Endothelial cell of umbilical vein (primary cell): ENCODE measurements at regions of chr1 and their contacts with region 1.

Region 1: DNA sequence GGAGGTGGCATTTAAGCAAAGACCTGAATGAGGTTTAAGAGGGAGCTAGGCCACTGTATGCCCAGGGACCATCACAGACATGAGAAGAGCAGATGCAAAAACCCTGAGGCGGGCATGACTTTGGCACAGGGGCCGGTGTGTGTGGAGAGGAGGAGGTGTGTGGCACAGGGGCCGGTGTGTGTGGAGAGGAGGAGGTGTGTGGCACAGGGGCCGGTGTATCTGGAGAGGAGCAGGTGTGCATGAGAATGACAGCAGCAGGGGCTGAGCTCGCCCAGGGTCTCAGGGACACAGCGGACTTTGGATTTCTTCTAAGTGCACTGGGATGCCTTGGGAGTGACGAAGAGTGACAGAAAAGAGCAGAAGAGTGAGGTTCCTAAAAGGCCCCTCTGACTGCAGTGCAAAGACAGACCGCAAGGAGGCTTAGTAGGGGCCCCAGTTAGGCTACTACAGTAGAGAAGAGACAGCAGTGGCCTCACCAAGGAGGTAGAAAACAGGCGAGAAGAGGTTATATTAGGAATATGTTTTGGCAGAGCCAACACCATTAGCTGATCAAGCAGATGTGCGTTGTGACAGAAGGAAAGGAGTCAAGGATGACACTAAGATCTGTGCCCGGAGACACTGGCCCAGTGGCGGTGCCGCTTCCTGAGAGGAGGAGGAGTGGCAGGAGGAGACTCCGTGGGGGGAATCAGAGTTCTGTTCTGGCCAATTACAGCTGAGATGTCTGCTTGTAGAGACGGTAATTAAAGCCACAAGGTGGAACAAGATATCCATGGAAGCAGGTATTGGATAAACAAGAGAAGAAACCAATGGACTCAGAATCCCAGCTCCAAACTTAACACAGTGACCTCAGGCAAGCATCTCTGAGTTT is 18.4 kb downstream of the ZBTB17 start:
- DNase-seq: no peak
- H3K4me3 ChIP-seq: no peak overlapping the region
- H3K27ac ChIP-seq: peak overlapping the region; percentile 48
- H3K4me1 ChIP-seq: peaks cover 49% of the 10 kb centered on the region
- H3K27me3 ChIP-seq: no peaks in the 10 kb centered on the region
- CTCF ChIP-seq: peak in 1 of 2 donors; percentile 38
- POLR2A ChIP-seq: no peak

Region 2: DNA sequence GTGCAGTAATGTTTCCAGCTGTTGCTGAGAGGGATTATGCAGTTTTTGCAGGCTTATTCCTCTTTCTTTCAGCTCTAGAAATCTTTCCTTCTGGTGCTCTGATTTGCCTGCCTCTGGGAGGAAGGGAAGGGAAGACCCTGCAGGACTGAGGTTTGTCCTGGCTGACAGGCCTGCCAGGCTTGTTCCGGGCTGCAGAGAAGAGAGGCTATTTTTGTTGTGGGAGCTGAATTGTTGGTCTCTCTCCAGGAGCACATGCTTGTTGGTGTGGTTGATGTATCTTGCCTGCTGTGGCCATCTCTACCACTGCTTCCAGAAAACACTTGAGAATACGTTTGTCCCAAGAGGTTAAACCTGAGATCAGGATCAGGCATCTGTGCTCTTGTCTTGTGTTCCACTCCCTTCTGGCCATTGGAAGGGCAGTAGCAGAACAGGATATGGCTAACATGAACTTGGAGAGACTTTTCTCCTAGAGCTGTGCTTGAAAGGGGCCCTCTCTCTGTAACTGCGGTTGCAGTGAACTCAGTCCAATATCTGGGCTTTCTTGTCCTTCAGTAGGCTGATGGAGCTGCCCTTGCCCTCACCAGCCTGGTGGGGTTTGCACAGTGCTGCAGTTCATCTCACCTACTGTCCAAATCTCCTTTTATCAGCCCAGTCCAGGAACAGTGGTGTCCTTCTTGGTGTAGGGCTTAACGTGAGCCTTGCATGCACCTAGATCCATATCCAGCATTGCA is 242.9 kb before region 1 on chr1:
- CTCF ChIA-PET with region 1: no interaction called
- POLR2A ChIA-PET with region 1: no interaction called
- dilution Hi-C with region 1: no loop called
- intact Hi-C with region 1: no loop called
- DNase-seq: no peak
- H3K4me3 ChIP-seq: no peak overlapping the region
- H3K27ac ChIP-seq: no peak overlapping the region
- H3K4me1 ChIP-seq: no peaks in the 10 kb centered on the region
- H3K27me3 ChIP-seq: no peaks in the 10 kb centered on the region
- CTCF ChIP-seq: no peak
- POLR2A ChIP-seq: no peak

Region 3: DNA sequence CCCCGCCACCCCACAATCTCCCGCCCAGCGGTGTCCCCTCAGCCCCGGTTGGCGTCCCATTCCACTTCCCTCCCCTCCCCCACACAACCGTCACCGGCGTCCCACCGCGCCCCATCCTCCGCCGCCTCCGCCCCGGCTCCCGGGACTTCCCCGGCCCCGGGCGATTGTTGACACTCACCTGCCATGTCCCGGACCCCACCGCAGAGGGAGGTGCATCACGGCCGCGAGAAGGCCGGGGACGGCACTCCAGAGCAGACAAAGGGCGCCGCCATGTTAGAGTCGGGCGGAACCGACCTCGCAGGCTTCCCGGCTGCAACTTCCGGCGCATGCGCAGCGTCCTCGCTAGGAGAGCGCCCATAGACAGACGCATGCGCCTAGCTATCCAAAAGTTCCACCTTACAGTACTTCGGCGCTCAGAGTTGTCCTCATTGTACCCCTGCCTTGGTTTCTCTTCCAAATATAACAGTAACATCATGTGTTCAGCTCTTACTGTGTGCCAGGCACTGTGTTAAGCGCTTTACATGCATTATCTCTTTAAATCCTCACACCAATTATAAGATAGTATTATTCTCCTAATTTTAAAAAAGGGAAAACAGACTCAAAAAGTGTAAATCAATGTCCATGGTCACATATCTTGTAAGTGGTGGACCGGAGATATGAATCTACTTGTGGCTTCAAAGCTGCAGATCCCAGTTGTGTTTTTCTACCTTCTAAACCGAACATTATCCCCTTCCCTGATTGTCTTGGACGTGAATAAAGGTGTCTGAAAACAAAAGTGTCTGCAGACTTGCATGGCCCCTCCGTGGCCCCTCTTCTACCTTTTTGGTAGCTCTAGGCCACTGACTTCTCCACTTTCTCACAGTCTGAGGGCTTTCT is 18.6 kb after region 1 on chr1 and contains the start of gene ZBTB17:
- CTCF ChIA-PET with region 1: interaction called, 18 read pairs
- POLR2A ChIA-PET with region 1: no interaction called
- dilution Hi-C with region 1: no loop called
- intact Hi-C with region 1: loop called (anchors 2 kb)
- DNase-seq: peak; percentile 92
- H3K4me3 ChIP-seq: peak within 1 kb of the TSS; percentile 61 to 92 (median 88)
- H3K27ac ChIP-seq: peak within 1 kb of the TSS; percentile 57
- H3K4me1 ChIP-seq: peaks cover 7% of the 10 kb centered on the region
- H3K27me3 ChIP-seq: no peaks in the 10 kb centered on the region
- CTCF ChIP-seq: no peak
- POLR2A ChIP-seq: peak; percentile 54
- total RNA-seq, gene ZBTB17: 38.5 and 43.9 TPM in 2 replicates

Region 4: GRCh38 chr1:15994590-15995351 is 37.3 kb after region 1 on chr1:
- CTCF ChIA-PET with region 1: interaction called, 10 read pairs
- POLR2A ChIA-PET with region 1: no interaction called
- dilution Hi-C with region 1: no loop called
- intact Hi-C with region 1: loop called (anchors 1 kb)
- DNase-seq: peak; percentile 71
- H3K4me3 ChIP-seq: no peak overlapping the region
- H3K27ac ChIP-seq: no peak overlapping the region
- H3K4me1 ChIP-seq: no peaks in the 10 kb centered on the region
- H3K27me3 ChIP-seq: peaks cover 0 to 2% of the 10 kb centered on the region in 2 experiments
- CTCF ChIP-seq: peak; percentile 88 to 96
- POLR2A ChIP-seq: no peak